ENCODE measurements at regions of chr7 and their contacts with region 1.

Region 1: DNA sequence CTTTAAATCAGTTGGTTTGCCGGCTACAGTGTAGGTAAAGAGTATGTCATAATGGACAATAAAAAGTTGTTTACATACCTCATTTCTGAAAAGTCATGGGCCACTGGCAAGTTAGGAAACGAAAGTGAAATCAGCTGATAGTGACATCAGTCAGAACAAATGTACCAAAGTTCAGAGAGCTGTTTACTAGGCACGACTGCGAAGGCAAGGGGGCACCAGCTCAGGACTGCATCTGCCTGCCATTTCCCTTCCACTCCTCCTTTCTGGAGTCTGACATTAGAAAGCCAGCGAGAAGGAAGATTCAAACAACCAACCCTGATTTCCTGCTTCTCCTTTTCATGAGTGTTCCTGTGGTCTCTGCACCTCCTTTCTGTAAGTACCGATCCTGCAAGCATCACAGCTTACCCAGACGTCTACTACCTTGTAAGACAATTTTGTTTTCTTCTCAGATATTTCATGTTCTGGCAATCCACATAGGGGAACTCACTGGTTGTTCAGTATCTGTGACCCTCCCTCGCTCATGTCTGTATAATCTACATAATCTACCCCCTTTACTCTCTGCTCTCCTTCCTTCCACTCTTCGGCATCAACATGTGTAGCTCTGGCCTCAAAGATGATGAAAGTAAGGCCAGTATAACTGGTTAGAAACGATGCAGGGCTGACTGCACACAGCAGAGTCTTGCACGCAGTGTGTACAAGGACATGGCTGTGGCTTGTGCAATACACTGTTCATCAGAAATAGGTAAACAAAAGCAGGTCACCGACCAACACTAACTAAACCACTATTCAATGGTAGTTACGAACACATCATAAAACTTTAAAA is at the start of gene TMEM140:
- DNase-seq: peak in 1 of 2 donors; percentile 77
- ATAC-seq: peak; percentile 73 to 84 (median 79)
- H3K4me3 ChIP-seq: peak within 1 kb of the TSS; percentile 78
- H3K27ac ChIP-seq: peak within 1 kb of the TSS; percentile 97
- H3K4me1 ChIP-seq: peaks cover 40% of the 10 kb centered on the region
- H3K27me3 ChIP-seq: no peaks in the 10 kb centered on the region
- CTCF ChIP-seq: no peak
- total RNA-seq, gene TMEM140: 67.0 to 106 (median 74.0) TPM

Region 2: DNA sequence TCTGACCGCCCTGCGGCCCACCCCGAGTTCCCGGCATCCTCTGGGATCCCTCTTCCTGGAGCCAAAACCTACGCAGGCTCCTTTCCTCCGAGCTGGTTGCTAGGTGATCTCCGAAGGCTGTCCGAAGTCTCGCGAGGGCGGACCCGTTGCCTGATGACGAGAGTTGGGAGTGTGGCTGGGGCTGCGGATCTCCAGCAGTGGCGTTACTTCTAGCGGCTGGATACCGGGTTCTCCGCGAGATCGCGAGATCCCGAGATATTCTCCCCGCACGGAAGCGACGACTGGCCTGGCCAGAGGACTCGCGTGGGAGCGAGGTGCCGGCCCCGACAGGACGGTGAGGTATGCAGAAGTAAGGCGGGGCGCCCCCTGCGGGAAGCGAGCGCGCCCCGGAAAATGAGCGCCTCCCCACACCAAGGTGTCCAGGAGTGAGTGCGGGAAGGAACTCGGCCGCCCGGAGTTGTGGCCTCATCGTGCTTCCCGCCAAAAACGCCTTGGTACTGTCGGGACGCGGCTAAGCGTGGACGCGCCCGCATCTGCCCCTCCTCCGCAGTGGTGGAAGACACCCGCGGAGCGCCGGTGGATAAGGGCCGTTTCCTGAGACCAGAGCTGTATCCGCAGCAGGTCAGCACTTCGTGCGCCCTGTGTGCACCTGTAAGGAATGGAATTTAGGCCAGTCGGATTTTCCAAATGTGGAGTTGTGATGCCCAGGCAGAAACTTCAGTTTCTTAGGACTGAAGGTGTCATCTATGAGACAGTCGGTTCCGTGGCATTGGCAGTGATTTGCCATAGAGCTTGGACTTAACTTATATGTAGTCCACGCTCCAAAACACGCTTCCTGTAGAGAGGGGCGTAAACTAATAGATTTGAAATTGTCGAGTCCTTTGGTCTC is 161.5 kb before region 1 on chr7 and contains the start of gene AGBL3:
- intact Hi-C with region 1: loop called in 1 of 2 experiments (anchors 5 kb)
- DNase-seq: peak; percentile 97 to 98
- ATAC-seq: peak; percentile 98 to 99 (median 99)
- H3K4me3 ChIP-seq: peak within 1 kb of the TSS; percentile 78
- H3K27ac ChIP-seq: peak within 1 kb of the TSS; percentile 88
- H3K4me1 ChIP-seq: peaks cover 9% of the 10 kb centered on the region
- H3K27me3 ChIP-seq: no peaks in the 10 kb centered on the region
- CTCF ChIP-seq: peak; percentile 57
- total RNA-seq, gene AGBL3: 1.1 to 3.5 (median 2.3) TPM

Region 3: DNA sequence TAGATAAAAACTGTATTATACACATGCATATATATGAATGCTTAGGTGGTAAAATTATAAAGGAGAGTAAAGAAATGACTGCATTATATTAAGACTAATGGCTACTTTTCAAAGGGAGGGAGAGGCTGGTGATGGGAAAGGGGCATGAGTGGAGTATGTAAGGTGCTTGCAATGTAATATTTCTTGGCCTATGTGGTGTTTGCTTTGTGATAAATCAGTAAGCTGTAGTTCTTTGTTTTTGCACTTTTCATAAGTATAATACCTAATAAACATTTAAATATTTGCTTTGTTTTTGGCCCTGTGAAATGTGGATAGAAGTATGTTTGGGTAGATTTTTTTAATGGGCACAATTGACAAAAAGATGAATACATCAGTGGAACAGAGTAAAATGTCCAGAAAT is 135.9 kb before region 1 on chr7:
- intact Hi-C with region 1: no loop called
- DNase-seq: no peak
- ATAC-seq: no peak
- H3K4me3 ChIP-seq: no peak overlapping the region
- H3K27ac ChIP-seq: no peak overlapping the region
- H3K4me1 ChIP-seq: no peaks in the 10 kb centered on the region
- H3K27me3 ChIP-seq: no peaks in the 10 kb centered on the region
- CTCF ChIP-seq: no peak

Region 4: DNA sequence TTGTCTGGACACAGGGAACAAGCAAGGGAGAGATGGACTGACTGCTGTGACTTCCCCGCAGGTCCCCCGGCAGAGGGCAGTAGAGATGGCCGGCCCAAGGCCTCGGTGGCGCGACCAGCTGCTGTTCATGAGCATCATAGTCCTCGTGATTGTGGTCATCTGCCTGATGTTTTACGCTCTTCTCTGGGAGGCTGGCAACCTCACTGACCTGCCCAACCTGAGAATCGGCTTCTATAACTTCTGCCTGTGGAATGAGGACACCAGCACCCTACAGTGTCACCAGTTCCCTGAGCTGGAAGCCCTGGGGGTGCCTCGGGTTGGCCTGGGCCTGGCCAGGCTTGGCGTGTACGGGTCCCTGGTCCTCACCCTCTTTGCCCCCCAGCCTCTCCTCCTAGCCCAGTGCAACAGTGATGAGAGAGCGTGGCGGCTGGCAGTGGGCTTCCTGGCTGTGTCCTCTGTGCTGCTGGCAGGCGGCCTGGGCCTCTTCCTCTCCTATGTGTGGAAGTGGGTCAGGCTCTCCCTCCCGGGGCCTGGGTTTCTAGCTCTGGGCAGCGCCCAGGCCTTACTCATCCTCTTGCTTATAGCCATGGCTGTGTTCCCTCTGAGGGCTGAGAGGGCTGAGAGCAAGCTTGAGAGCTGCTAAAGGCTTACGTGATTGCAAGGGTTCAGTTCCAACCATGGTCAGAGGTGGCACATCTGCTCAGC is 16.4 kb after region 1 on chr7:
- intact Hi-C with region 1: loop called (anchors 2 kb)
- DNase-seq: peak; percentile 80 to 93
- ATAC-seq: peak; percentile 76 to 83 (median 82)
- H3K4me3 ChIP-seq: peak overlapping the region; percentile 53
- H3K27ac ChIP-seq: peak overlapping the region; percentile 100
- H3K4me1 ChIP-seq: peaks cover 93% of the 10 kb centered on the region
- H3K27me3 ChIP-seq: no peaks in the 10 kb centered on the region
- CTCF ChIP-seq: peak; percentile 80

Measured in psoas muscle (tissue), 8 donors.